ENCODE measurements at regions of chr1 and their contacts with region 1.

Region 1: GRCh38 chr1:235938709-235939479 is 72.2 kb upstream of the LYST start:
- DNase-seq: no peak
- ATAC-seq: peak; percentile 80
- H3K4me3 Mint-ChIP-seq: peak overlapping the region; percentile 76
- H3K27ac Mint-ChIP-seq: peak overlapping the region; percentile 86
- H3K4me1 Mint-ChIP-seq: peaks cover 90% of the 10 kb centered on the region
- H3K27me3 Mint-ChIP-seq: no peaks in the 10 kb centered on the region
- CTCF ChIP-seq: no peak

Region 2: GRCh38 chr1:235901461-235901860 is 37.4 kb before region 1 on chr1:
- CTCF ChIA-PET with region 1: no interaction called
- POLR2A ChIA-PET with region 1: interaction called, 14 read pairs
- intact Hi-C with region 1: no loop called
- DNase-seq: no peak
- ATAC-seq: no peak
- H3K4me3 Mint-ChIP-seq: no peak overlapping the region
- H3K27ac Mint-ChIP-seq: peak overlapping the region; percentile 5
- H3K4me1 Mint-ChIP-seq: peaks cover 18% of the 10 kb centered on the region
- H3K27me3 Mint-ChIP-seq: no peaks in the 10 kb centered on the region
- CTCF ChIP-seq: no peak

Region 3: DNA sequence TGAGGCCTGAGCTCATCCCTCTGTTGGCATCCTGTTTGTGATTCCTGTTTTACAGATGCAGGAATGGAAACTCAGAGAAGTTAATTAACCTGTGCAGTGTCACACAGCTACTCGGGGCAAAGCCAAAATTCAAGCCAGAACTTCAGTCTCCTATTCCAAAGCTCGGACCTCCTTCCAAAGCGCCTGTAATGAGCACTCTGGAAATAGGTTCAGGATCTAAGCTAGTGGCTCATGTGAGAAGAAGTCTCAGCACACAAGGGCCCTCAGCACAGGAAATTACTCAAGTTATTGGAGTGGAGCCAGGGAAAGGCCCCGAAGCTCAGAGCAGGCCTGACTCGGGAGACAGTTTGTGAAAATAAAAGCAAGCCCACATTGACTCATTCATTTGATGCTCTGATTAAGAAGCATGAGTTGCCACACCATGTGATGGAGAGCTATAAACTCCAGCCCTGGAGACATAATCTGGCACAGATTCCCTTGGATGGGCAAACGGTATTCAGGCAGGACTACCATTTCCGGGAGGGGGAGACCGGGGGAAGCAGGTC is 21.6 kb before region 1 on chr1:
- CTCF ChIA-PET with region 1: no interaction called
- POLR2A ChIA-PET with region 1: interaction called, 10 read pairs
- intact Hi-C with region 1: loop called (anchors 2 kb)
- DNase-seq: no peak
- ATAC-seq: peak; percentile 90
- H3K4me3 Mint-ChIP-seq: no peak overlapping the region
- H3K27ac Mint-ChIP-seq: peak overlapping the region; percentile 68
- H3K4me1 Mint-ChIP-seq: peaks cover 38% of the 10 kb centered on the region
- H3K27me3 Mint-ChIP-seq: no peaks in the 10 kb centered on the region
- CTCF ChIP-seq: no peak

Region 4: GRCh38 chr1:235923466-235924021 is 15.3 kb before region 1 on chr1:
- CTCF ChIA-PET with region 1: no interaction called
- POLR2A ChIA-PET with region 1: interaction called, 11 read pairs
- intact Hi-C with region 1: loop called (anchors 2 kb)
- DNase-seq: no peak
- ATAC-seq: peak; percentile 85
- H3K4me3 Mint-ChIP-seq: peak overlapping the region; percentile 56
- H3K27ac Mint-ChIP-seq: peak overlapping the region; percentile 78
- H3K4me1 Mint-ChIP-seq: peaks cover 59% of the 10 kb centered on the region
- H3K27me3 Mint-ChIP-seq: no peaks in the 10 kb centered on the region
- CTCF ChIP-seq: no peak

Measured in activated B cell treated with CpG ODN at 0.5 μM for 24 hours (primary cell).